ENCODE measurements at regions of chr6 and their contacts with region 1.

Region 1: DNA sequence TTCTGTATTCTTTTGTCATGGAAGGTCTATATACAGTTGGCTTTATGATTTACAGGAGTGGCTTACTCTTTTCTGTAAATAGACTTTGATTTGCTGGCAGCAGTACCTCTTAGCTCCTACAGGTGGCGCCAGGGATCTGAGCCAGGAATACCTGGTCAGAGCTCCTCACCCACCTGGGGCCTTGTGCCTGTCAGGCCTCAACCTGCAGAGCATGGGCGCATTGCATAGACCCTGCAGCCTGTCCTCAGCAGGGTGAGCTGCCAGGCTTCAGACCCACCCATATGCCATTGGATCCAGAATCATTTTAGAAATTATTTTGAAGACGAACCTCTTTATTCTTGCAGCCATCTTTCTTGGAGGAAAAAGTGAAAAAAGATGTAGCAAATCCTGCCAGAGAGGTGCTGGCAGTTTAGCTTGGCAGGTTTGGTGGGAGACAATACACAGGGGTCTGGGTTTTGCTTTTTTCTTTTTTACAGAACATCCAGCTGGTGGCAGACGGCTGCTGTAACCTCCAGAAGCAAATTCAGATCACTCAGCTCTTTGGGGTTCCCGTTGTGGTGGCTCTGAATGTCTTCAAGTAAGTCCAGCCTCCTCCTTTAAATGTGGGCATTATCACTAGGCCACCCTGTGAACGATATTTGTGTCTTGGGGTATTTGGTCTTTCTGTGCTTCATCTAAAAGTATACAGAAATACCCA is 149.1 kb downstream of the MTHFD1L start:
- DNase-seq: peak; percentile 80
- H3K4me3 ChIP-seq: no peak overlapping the region
- H3K27ac ChIP-seq: peak overlapping the region; percentile 90
- H3K4me1 ChIP-seq: peaks cover 35% of the 10 kb centered on the region
- H3K27me3 ChIP-seq: no peaks in the 10 kb centered on the region
- CTCF ChIP-seq: peak; percentile 91 to 94
- POLR2A ChIP-seq: no peak

Region 2: DNA sequence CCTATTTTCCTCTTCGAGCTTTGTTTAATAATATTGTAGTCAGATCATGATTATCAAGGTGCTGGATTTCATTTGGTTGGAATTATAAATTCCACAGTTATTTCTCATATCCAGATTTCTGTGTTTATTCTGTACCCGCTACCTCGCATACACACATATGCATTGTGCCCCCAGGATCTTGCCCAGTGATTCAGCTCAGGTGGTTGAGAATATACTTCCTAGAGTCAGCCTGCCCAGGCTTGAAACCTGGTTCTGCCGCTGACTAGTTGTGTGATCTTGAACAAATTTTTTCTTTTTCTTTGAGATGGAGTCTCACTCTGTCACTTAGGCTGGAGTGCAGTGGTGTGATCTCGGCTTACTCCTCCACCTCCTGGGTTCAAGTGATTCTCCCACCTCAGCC is 1433.7 kb before region 1 on chr6:
- CTCF ChIA-PET with region 1: no interaction called
- POLR2A ChIA-PET with region 1: no interaction called
- dilution Hi-C with region 1: no loop called
- intact Hi-C with region 1: no loop called
- DNase-seq: no peak
- H3K4me3 ChIP-seq: no peak overlapping the region
- H3K27ac ChIP-seq: no peak overlapping the region
- H3K4me1 ChIP-seq: no peaks in the 10 kb centered on the region
- H3K27me3 ChIP-seq: no peaks in the 10 kb centered on the region
- CTCF ChIP-seq: no peak
- POLR2A ChIP-seq: no peak

Region 3: GRCh38 chr6:150499882-150500312 is 514.7 kb before region 1 on chr6:
- CTCF ChIA-PET with region 1: no interaction called
- POLR2A ChIA-PET with region 1: no interaction called
- dilution Hi-C with region 1: no loop called
- intact Hi-C with region 1: no loop called
- DNase-seq: no peak
- H3K4me3 ChIP-seq: no peak overlapping the region
- H3K27ac ChIP-seq: no peak overlapping the region
- H3K4me1 ChIP-seq: no peaks in the 10 kb centered on the region
- H3K27me3 ChIP-seq: no peaks in the 10 kb centered on the region
- CTCF ChIP-seq: no peak
- POLR2A ChIP-seq: no peak

Region 4: DNA sequence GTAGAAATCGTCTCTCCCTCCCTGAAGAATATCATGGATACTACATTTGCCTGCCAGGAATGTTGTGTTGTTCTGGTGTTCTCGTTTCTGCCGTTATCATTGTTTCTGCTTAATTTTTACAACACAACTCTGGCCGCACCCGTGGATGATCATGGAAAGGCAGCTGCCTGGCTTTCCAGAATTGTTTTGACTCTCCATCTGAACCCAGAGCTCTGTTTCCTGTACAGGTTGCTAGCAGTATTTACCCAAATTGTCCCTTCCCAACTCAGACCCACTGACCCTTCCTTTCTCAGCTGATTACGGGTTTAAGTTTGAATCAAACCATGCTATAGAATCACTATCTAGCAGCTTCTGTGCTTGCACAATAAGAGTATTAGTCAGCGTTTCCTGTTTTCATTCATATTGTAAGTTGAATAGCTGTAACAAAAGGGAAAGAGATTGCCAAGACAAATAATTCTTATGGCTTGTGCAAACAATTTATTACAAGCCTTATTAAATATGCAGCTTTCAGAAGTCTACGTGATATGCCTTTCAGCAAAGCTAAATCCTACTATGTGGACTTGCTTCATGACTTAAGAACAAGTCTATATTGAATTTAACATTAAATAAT is 10.0 kb before region 1 on chr6:
- CTCF ChIA-PET with region 1: interaction called, 39 read pairs
- POLR2A ChIA-PET with region 1: no interaction called
- dilution Hi-C with region 1: no loop called
- intact Hi-C with region 1: no loop called
- DNase-seq: peak; percentile 100
- H3K4me3 ChIP-seq: no peak overlapping the region
- H3K27ac ChIP-seq: peak overlapping the region; percentile 94
- H3K4me1 ChIP-seq: peaks cover 41% of the 10 kb centered on the region
- H3K27me3 ChIP-seq: no peaks in the 10 kb centered on the region
- CTCF ChIP-seq: no peak
- POLR2A ChIP-seq: peak; percentile 71

Region 5: DNA sequence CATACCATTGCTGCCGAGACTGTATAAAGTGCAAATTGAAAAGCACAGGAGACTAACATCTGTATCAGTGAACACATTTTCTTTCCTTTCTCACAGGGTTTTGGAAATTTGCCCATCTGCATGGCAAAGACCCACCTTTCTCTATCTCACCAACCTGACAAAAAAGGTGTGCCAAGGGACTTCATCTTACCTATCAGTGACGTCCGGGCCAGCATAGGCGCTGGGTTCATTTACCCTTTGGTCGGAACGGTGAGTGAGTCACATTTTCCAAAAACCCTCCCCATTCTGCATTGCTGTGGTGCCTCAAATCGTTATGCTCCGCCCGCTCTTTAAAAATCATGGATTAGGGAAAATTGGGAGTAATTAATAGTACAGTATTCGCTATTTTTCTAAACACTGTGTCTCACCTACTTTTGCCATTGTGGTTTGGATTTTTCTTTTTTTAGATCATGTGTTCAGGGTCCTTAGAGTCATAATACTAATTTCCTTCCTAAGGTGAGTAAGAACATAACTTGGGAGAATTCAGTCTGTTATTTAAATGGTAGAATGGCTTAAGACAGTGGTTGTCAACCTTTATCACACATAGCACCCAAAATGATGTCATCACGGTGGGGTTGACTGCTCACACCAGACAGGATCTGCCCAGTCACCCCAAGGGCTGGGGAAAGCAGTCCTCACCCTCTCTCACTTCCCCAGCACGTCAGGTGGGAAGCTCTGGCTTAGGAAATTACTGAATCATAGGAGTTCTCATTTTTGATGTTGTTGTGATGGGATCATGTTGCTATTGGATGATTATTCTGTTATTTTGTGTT is 22.5 kb after region 1 on chr6:
- CTCF ChIA-PET with region 1: interaction called, 14 read pairs
- POLR2A ChIA-PET with region 1: no interaction called
- dilution Hi-C with region 1: no loop called
- intact Hi-C with region 1: no loop called
- DNase-seq: peak; percentile 82
- H3K4me3 ChIP-seq: no peak overlapping the region
- H3K27ac ChIP-seq: peak overlapping the region; percentile 100
- H3K4me1 ChIP-seq: peaks cover 52% of the 10 kb centered on the region
- H3K27me3 ChIP-seq: no peaks in the 10 kb centered on the region
- CTCF ChIP-seq: no peak
- POLR2A ChIP-seq: peak; percentile 44

Region 6: GRCh38 chr6:151141685-151142084 is 127.1 kb after region 1 on chr6:
- CTCF ChIA-PET with region 1: interaction called, 3 read pairs
- POLR2A ChIA-PET with region 1: no interaction called
- dilution Hi-C with region 1: no loop called
- intact Hi-C with region 1: loop called (anchors 5 kb)
- DNase-seq: peak; percentile 61
- H3K4me3 ChIP-seq: no peak overlapping the region
- H3K27ac ChIP-seq: peak overlapping the region; percentile 63
- H3K4me1 ChIP-seq: peaks cover 12% of the 10 kb centered on the region
- H3K27me3 ChIP-seq: no peaks in the 10 kb centered on the region
- CTCF ChIP-seq: no peak
- POLR2A ChIP-seq: no peak

Region 7: GRCh38 chr6:151317103-151317994 is 302.8 kb after region 1 on chr6:
- CTCF ChIA-PET with region 1: interaction called, 284 read pairs
- POLR2A ChIA-PET with region 1: no interaction called
- dilution Hi-C with region 1: no loop called
- intact Hi-C with region 1: no loop called
- DNase-seq: peak; percentile 49
- H3K4me3 ChIP-seq: no peak overlapping the region
- H3K27ac ChIP-seq: no peak overlapping the region
- H3K4me1 ChIP-seq: no peaks in the 10 kb centered on the region
- H3K27me3 ChIP-seq: no peaks in the 10 kb centered on the region
- CTCF ChIP-seq: no peak
- POLR2A ChIP-seq: no peak

Region 8: DNA sequence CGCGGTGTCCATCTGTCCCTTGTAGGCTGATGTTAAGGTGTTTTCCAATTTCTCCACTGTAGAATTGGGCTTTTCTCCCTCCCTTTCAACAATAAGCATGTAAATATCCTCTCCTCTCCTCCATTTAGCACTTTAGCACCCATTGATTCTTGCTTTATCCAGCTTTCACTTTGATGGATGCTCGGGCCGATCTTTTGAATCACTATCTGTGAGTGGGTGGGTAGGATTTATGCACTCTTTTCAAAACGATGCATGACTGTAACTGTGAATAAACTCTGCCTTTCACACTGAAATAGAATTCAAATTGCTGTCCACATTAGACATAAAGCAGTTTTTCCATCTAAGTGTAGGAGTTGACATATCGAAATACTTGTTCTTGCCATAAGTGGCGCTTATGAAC is 324.3 kb after region 1 on chr6:
- CTCF ChIA-PET with region 1: interaction called, 42 read pairs
- POLR2A ChIA-PET with region 1: no interaction called
- dilution Hi-C with region 1: no loop called
- intact Hi-C with region 1: loop called (anchors 1 kb)
- DNase-seq: no peak
- H3K4me3 ChIP-seq: no peak overlapping the region
- H3K27ac ChIP-seq: no peak overlapping the region
- H3K4me1 ChIP-seq: no peaks in the 10 kb centered on the region
- H3K27me3 ChIP-seq: no peaks in the 10 kb centered on the region
- CTCF ChIP-seq: no peak
- POLR2A ChIP-seq: no peak

Measured in endothelial cell of umbilical vein (primary cell).